ENCODE measurements at regions of chr19 and their contacts with region 1.

Region 1: GRCh38 chr19:11798391-11799330 is at the start of gene ZNF491:
- H3K4me3 ChIP-seq: peak within 1 kb of the TSS; percentile 55
- H3K27ac ChIP-seq: no peak within 1 kb of the TSS
- H3K4me1 ChIP-seq: no peaks in the 10 kb centered on the region
- CTCF ChIP-seq: no peak

Region 2: DNA sequence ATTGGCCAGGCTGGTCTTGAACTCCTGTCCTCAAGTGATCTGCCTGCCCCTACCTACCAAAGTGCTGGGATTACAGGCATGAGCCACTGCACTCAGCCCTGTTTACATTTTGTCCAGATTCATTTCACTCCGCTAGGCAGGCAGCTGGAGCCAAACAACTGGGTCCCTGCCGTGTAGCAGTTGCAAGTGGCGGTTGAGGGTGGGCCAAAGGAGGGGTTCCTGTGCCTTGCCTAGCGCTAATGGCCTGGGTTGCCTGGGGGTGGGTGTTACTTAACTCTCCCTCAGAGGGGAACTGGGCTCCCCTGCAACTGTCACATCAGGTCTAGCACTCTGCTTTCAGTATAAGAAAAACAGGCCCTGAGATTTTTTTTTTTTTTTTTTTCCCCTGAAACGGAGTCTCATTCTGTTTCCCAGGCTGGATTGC is 228.6 kb before region 1 on chr19:
- CTCF ChIA-PET with region 1: no interaction called
- POLR2A ChIA-PET with region 1: no interaction called
- H3K4me3 ChIP-seq: no peak overlapping the region
- H3K27ac ChIP-seq: no peak overlapping the region
- H3K4me1 ChIP-seq: no peaks in the 10 kb centered on the region
- CTCF ChIP-seq: no peak

Region 3: GRCh38 chr19:11648313-11648712 is 150.3 kb before region 1 on chr19:
- CTCF ChIA-PET with region 1: no interaction called
- POLR2A ChIA-PET with region 1: no interaction called
- H3K4me3 ChIP-seq: no peak overlapping the region
- H3K27ac ChIP-seq: no peak overlapping the region
- H3K4me1 ChIP-seq: no peaks in the 10 kb centered on the region
- CTCF ChIP-seq: no peak

Region 4: GRCh38 chr19:11814029-11814699 is 15.5 kb after region 1 on chr19 and contains the start of gene ZNF440:
- CTCF ChIA-PET with region 1: interaction called, 29 read pairs
- POLR2A ChIA-PET with region 1: interaction called, 3 read pairs
- H3K4me3 ChIP-seq: peak within 1 kb of the TSS; percentile 87
- H3K27ac ChIP-seq: no peak within 1 kb of the TSS; the same call in 1 of the 2 replicates
- H3K4me1 ChIP-seq: no peaks in the 10 kb centered on the region
- CTCF ChIP-seq: peak; percentile 43; the same call in 1 of the 2 replicates

Measured in HEK293 (cell line).